ENCODE measurements at regions of chr20 and their contacts with region 1.

Region 1: GRCh38 chr20:31723319-31724078 is 831 bp upstream of the BCL2L1 start:
- DNase-seq: peak; percentile 99
- ATAC-seq: peak; percentile 91
- H3K4me3 Mint-ChIP-seq: peak overlapping the region; percentile 90
- H3K27ac Mint-ChIP-seq: peak overlapping the region; percentile 97
- H3K4me1 Mint-ChIP-seq: peaks cover 30% of the 10 kb centered on the region
- H3K27me3 Mint-ChIP-seq: no peaks in the 10 kb centered on the region

Region 2: GRCh38 chr20:31560094-31560899 is 163.2 kb before region 1 on chr20:
- CTCF ChIA-PET with region 1: interaction called, 12 read pairs
- DNase-seq: peak; percentile 83
- ATAC-seq: peak; percentile 71
- H3K4me3 Mint-ChIP-seq: no peak overlapping the region
- H3K27ac Mint-ChIP-seq: peak overlapping the region; percentile 82
- H3K4me1 Mint-ChIP-seq: peaks cover 17% of the 10 kb centered on the region
- H3K27me3 Mint-ChIP-seq: no peaks in the 10 kb centered on the region

Region 3: GRCh38 chr20:31633339-31633914 is 90.1 kb before region 1 on chr20:
- CTCF ChIA-PET with region 1: interaction called, 101 read pairs
- DNase-seq: no peak
- ATAC-seq: no peak
- H3K4me3 Mint-ChIP-seq: no peak overlapping the region
- H3K27ac Mint-ChIP-seq: no peak overlapping the region
- H3K4me1 Mint-ChIP-seq: peaks cover 6% of the 10 kb centered on the region
- H3K27me3 Mint-ChIP-seq: peaks cover 17% of the 10 kb centered on the region

Region 4: DNA sequence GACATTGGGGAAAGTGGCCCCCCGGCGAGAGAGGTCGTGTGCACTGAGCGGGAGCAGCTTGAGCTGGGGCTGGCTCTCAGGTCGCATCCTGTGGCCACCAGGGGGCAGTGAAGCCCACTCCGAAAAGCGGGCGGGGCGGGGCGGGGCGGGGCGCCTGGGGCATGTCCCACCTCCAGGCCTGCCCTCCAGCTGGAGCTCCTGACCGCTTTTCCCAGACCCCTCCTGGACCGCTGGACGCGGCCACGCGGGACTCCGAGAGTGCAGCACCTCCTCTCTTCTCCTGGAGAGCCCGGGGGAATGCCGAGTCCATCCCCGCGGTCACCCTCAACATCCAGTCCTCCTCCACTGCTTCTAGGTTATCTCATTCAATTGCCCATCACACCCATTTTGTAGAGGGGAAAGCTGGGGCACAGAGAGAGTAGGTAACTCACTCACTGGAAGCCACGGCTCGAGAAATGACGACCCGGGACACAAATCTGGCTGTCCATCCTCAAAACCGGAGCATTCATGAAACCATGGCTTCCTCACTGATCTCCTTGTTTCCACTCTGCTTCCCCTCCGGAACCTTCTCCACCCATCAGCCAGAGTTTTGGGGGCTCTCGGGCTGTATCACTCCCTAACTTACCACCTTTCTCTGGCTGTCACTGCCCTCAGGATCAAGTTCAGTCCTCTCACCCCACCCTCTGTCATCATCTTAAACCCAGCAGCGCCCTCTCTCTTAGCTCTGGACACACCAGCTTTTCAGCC is 61.7 kb before region 1 on chr20:
- CTCF ChIA-PET with region 1: interaction called, 685 read pairs
- DNase-seq: peak; percentile 82
- ATAC-seq: peak; percentile 86
- H3K4me3 Mint-ChIP-seq: peak overlapping the region; percentile 50
- H3K27ac Mint-ChIP-seq: peak overlapping the region; percentile 84
- H3K4me1 Mint-ChIP-seq: peaks cover 43% of the 10 kb centered on the region
- H3K27me3 Mint-ChIP-seq: no peaks in the 10 kb centered on the region

Region 5: GRCh38 chr20:31684153-31685015 is 39.1 kb before region 1 on chr20:
- CTCF ChIA-PET with region 1: interaction called, 39 read pairs
- DNase-seq: no peak
- ATAC-seq: peak; percentile 20
- H3K4me3 Mint-ChIP-seq: no peak overlapping the region
- H3K27ac Mint-ChIP-seq: peak overlapping the region; percentile 71
- H3K4me1 Mint-ChIP-seq: peaks cover 74% of the 10 kb centered on the region
- H3K27me3 Mint-ChIP-seq: no peaks in the 10 kb centered on the region

Region 6: GRCh38 chr20:31698803-31699718 is 24.4 kb before region 1 on chr20:
- CTCF ChIA-PET with region 1: interaction called, 120 read pairs
- DNase-seq: peak; percentile 67
- ATAC-seq: peak; percentile 93
- H3K4me3 Mint-ChIP-seq: peak overlapping the region; percentile 47
- H3K27ac Mint-ChIP-seq: peak overlapping the region; percentile 92
- H3K4me1 Mint-ChIP-seq: peaks cover 66% of the 10 kb centered on the region
- H3K27me3 Mint-ChIP-seq: no peaks in the 10 kb centered on the region

Region 7: DNA sequence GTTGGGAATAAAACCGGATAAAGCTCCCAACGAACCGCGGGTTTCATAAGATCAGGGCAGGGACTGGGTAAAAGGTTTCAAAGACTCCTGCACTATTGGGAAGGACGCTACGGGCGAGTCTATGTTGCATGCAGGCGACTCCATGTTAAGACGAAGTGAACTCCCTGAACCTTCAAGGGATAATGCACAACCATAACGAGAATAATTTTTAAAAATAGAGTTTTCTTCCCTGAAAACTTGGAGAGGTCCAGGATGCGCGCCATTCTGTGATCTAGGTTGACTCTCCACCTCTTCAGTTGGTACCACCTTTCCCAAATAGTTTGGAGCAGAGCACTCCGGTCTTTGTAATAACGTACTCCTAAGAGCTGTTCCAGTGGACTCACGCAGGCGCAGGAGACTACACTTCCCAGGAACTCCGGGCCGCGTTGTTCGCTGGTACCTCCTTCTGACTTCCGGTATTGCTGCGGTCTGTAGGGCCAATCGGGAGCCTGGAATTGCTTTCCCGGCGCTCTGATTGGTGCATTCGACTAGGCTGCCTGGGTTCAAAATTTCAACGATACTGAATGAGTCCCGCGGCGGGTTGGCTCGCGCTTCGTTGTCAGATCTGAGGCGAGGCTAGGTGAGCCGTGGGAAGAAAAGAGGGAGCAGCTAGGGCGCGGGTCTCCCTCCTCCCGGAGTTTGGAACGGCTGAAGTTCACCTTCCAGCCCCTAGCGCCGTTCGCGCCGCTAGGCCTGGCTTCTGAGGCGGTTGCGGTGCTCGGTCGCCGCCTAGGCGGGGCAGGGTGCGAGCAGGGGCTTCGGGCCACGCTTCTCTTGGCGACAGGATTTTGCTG is 15.4 kb after region 1 on chr20 and contains the start of gene TPX2:
- CTCF ChIA-PET with region 1: interaction called, 59 read pairs
- DNase-seq: peak; percentile 91
- ATAC-seq: peak; percentile 93
- H3K4me3 Mint-ChIP-seq: no peak within 1 kb of the TSS
- H3K27ac Mint-ChIP-seq: no peak within 1 kb of the TSS
- H3K4me1 Mint-ChIP-seq: peaks cover 10% of the 10 kb centered on the region
- H3K27me3 Mint-ChIP-seq: peaks cover 5% of the 10 kb centered on the region
- total RNA-seq, gene TPX2: 148 to 159 TPM

Region 8: GRCh38 chr20:31842471-31843157 is 119.1 kb after region 1 on chr20:
- CTCF ChIA-PET with region 1: no interaction called
- DNase-seq: no peak
- ATAC-seq: no peak
- H3K4me3 Mint-ChIP-seq: no peak overlapping the region
- H3K27ac Mint-ChIP-seq: no peak overlapping the region
- H3K4me1 Mint-ChIP-seq: no peaks in the 10 kb centered on the region
- H3K27me3 Mint-ChIP-seq: peaks cover 6% of the 10 kb centered on the region

Region 9: DNA sequence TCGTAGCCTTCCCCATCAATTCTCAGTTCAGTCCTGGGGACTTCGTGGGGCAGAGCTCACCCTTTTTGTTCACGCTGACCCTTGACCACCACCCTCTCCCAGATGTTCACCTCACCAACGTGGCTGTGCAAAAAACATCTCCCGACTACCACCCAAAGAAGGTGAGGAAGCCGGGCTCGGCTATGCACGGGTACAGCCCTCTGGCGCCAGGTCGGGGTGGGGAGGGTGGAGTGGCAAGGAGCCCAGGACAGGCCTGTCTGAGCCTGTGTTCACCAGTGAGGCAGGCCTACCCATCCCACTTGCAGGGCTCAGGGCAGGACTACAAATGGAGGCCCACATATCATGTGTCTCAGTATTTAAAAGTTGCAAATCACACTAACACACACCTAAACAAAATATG is 210.2 kb after region 1 on chr20:
- CTCF ChIA-PET with region 1: no interaction called
- DNase-seq: no peak
- ATAC-seq: no peak
- H3K4me3 Mint-ChIP-seq: no peak overlapping the region
- H3K27ac Mint-ChIP-seq: no peak overlapping the region
- H3K4me1 Mint-ChIP-seq: no peaks in the 10 kb centered on the region
- H3K27me3 Mint-ChIP-seq: peaks cover 14% of the 10 kb centered on the region